Right ventricle myocardium inferior (tissue), 1 donor: ENCODE measurements at regions of chr13 and their contacts with region 1.

Region 1: DNA sequence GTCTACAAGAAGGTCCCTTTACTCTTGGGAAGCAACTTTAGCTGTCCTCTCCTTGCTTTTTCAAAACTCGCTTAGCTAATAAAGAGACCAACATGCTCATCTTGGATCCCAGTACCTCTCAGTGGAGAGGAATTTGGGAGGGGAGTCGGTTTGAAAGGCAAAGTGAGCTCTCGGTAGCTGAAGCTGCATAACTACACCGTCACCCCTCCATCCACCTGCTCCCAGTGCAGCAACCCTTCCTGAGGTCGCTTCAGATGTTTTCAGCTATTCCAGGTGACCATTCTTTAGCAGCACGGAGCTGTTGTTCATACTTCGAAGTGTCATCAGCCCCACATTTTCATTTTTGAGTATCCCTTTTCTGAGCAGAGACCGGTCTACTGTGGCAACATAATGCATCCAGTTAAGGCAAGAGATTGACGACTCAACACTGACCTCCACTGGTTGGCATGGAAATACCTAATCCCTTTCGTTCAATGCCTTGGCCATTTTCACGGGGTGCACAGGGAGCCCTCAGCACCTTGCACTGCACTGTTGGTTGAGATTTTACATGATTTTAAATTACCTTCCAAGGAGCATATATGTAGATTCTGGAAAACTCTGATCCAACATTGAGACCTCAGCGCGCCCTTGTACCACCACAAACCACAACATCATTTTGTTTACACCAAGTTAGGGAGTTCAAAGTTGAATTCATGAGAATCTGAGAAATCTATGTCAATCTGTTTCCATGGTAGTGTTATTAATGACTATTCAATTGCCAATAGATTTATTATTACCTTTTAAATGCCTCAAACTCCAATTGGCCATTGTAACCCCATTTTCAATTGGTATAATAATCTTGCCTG is 42.2 kb downstream of the DLEU7 start:
- DNase-seq: no peak
- ATAC-seq: peak; percentile 93

Region 2: DNA sequence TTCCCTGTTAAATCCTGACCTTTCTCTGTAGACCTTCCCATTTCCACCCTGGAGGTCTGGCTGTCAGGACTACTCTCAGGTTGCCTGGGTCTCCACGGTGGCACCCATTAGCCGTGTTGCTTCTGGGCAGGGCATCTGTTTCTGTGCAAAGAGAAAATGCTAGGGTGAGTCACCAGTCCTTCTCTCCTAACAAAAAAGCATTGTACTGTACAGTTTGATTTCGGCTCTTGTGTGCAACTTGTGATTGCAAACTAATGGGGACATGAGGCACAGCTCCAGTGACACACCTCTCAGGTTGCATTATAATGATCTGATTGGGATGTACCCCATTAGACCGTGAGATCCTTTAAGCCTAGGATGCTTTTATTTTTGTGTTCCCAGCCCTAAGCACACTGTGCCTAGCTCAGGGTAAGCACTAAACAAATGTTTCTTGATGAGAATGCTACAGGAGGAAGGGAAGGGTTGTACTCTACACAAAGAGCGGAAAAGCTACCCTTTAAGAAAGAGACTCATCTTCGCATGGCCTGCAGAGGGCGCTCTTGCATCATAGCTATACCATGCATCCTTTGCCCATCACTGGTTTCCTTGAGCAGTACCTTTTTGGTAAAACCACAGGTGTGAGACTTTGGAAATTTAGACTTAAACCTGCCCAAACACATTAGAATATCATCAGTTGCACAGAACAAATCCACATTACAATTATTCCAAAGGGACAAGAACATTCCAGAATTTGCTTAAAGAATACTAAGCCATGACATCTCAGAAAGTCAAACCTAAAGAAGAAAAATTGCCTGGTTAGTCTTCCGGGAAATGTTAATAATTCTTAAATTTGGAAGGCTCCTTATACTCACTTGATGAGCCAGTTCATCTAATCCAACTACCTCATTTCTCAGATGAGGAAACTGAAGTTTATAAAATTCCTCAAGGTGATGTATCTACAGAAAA is 824.7 kb before region 1 on chr13:
- intact Hi-C with region 1: loop called (anchors 2 kb)
- DNase-seq: peak; percentile 88
- ATAC-seq: peak; percentile 50

Region 3: DNA sequence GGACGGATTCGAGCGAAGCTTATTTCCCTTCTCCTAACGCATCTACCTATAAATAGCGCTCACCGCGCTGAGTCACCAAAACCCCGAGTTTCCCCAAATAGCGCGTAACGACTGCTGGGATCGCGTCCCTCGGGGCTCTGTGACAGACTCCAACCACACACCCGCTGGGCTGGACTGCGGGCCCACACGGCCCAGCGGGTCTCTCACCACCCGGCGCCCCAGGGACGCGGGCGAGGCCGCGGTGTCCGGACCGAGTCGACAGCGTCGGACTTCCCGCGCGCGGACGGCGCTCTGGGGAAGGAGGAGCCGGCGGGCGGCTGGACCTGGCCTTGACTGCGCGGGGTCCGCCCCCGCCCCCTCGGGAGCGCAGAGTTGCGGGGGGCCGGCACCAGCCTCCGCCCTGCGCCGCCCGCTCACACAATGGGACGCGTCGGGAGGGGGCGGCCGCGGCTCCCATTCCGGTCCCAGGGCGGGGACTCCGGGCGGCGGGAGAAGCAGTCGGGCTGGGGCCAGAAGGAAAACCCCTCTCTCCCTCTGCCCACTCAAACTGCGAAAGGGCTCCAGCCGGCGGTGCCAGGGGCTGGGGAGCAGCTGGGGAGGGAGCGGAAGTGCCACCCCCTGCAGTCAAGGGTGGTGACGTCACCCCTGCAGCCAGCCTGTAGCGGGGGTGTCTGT is 677.3 kb before region 1 on chr13:
- intact Hi-C with region 1: loop called (anchors 10 kb)
- DNase-seq: no peak
- ATAC-seq: peak; percentile 92

Region 4: DNA sequence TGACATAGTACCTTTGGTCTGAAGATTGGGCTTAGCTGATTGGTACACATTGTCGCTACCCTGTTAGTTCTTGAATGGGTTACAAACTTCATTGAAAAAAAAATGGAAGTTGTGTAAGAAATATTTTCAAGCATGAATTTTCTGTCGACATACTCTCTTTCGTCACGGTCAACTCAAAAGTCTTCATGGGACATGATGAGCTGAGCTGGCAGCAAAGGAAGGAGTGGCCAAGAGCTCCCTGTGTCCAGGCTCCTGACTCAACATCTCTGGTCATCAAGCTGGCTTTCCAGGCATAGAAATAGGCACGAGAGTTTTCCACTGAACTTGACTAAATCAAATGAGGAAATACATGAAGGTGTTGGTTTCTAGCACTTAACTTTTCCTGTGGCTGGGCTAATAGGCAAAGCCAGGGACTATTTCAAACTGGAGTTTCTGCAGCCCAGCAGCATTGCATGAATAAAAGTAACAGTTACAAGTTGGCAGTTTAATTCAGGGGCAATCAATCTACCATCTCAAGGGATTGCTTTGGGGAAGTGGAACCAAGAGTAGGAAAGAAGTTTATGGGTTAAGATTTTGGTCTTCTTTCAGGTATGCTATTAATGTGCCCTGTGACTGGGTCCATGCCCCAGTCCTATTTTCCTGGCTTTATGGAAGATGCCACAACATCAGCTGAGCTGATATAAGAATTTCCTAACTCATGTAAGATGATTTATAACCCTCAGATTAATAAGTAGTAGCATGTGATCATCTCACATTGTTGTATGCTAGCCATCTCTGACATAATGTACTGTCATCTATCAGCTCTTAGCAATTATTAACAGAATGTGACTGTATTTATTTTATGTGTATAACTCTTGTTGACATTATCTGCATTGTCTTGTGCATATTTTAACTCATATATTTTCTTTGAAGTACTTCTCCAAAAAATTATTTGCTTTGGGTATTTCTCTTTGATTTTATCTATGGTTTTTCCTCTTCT is 343.6 kb before region 1 on chr13:
- intact Hi-C with region 1: no loop called
- DNase-seq: no peak
- ATAC-seq: no peak

Region 5: DNA sequence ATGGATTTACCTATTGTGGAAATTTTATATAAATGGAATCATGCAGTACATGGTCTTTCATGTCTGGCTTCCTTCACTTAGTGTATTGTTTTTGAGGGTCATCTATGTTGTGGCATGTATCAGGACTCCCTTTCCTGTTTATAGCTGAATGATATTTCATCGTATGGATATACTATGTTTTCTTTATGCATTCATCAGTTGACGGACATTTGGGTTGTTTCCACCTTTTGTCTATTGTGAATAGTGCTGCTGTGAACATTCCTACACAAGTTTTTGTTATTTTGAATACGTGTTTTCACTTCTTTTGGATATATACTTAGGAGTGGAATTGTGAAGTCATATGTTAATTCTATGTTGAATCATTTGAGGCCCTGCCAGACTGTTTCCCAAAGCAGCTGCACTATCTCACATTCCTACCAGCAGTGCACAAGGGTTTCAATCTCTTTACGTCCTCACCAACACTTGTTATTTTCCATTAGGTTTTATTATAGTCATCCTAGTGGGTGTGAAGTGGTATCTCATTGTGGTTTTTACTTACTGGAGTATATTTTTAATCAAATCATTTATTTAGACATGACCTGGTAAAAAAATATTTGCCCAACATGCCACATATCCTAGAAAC is 220.5 kb before region 1 on chr13:
- intact Hi-C with region 1: loop called (anchors 5 kb)
- DNase-seq: no peak
- ATAC-seq: peak; percentile 72

Region 6: DNA sequence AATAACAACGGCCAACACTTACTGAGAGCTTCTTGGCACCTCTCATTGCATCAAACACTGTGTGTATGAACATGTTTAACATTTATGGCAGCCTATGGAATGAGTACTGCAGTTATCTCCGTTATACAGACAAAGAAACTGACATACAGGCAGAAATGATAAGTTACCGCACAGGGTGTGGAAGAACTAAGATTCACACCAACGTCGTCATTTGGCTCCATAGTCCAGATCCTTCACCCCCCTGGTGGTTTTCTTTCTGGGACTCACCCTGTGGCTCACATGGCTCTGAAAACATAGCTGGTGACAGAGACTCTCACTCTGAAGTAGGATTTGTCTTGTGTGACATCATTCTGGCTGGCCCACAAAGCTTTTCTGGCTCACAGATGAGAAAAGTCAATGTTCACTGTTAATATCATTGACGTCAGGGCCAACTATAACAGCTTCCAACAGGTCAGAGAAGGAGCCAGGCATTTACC is 187.9 kb before region 1 on chr13:
- intact Hi-C with region 1: no loop called
- DNase-seq: no peak
- ATAC-seq: peak; percentile 90

Region 7: GRCh38 chr13:50911937-50912795 is 110.9 kb after region 1 on chr13:
- intact Hi-C with region 1: loop called (anchors 5 kb)
- DNase-seq: peak; percentile 92
- ATAC-seq: peak; percentile 30

Region 8: GRCh38 chr13:51047434-51048165 is 246.3 kb after region 1 on chr13:
- intact Hi-C with region 1: no loop called
- DNase-seq: no peak
- ATAC-seq: no peak